Calu3 (cell line): ENCODE measurements at regions of chr12 and their contacts with region 1.

Region 1: GRCh38 chr12:31589904-31590641 is 863 bp downstream of the DENND5B start:
- DNase-seq: peak; percentile 65
- H3K4me3 Mint-ChIP-seq: peak overlapping the region; percentile 93
- H3K27ac Mint-ChIP-seq: peak overlapping the region; percentile 79
- H3K4me1 Mint-ChIP-seq: peaks cover 24% of the 10 kb centered on the region
- H3K27me3 Mint-ChIP-seq: no peaks in the 10 kb centered on the region
- CTCF ChIP-seq: no peak

Region 2: GRCh38 chr12:31471823-31472222 is 118.2 kb before region 1 on chr12:
- CTCF ChIA-PET with region 1: no interaction called
- intact Hi-C with region 1: loop called (anchors 5 kb)
- DNase-seq: no peak
- H3K4me3 Mint-ChIP-seq: no peak overlapping the region
- H3K27ac Mint-ChIP-seq: no peak overlapping the region
- H3K4me1 Mint-ChIP-seq: peaks cover 32% of the 10 kb centered on the region
- H3K27me3 Mint-ChIP-seq: no peaks in the 10 kb centered on the region
- CTCF ChIP-seq: no peak

Region 3: DNA sequence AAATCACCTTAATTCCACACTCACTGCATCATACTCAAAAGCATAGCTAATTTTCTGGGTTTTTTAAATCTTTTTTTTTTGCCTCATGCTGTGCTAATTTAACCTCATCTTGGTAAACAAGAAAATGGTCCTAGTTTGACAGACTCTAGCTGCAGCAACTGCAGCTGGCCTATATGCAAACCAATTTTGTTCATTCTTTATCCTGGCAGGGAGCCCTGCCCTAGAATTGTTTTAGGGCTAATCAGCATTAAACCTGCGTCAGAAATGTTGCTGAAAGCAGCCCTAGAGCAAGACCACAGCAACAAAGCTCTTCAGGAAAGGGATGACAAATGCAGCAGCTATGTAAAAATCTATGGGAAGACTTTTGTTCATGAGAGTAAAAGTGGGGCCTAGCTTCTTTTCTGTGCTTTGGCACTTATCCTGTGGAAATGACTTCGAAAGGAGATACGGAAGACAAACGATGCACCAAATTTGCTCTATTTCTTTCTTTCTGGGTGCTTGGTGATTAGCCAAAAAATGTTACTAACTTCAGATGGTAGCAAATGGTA is 71.3 kb before region 1 on chr12:
- CTCF ChIA-PET with region 1: no interaction called
- intact Hi-C with region 1: loop called (anchors 10 kb)
- DNase-seq: peak; percentile 57
- H3K4me3 Mint-ChIP-seq: no peak overlapping the region
- H3K27ac Mint-ChIP-seq: peak overlapping the region; percentile 34
- H3K4me1 Mint-ChIP-seq: peaks cover 34% of the 10 kb centered on the region
- H3K27me3 Mint-ChIP-seq: no peaks in the 10 kb centered on the region
- CTCF ChIP-seq: no peak